Activated T-helper 2 cell treated with anti-CD3 and anti-CD28 coated beads, Interferon-gamma antibody, Interleukin-2, Interleukin-4, amounts not matched to agents 10 μg/mL and 5 μg/mL and 100 μg/mL, durations not matched to agents 14 hours and 24 hours and 36 hours (primary cell): ENCODE measurements at regions of chr11 and their contacts with region 1.

Region 1: GRCh38 chr11:85752890-85753581 is 57.9 kb downstream of the SYTL2 start:
- DNase-seq: peak; percentile 91
- H3K4me3 Mint-ChIP-seq: peak overlapping the region; percentile 57
- H3K27ac Mint-ChIP-seq: peak overlapping the region; percentile 95
- H3K4me1 Mint-ChIP-seq: peaks cover 89% of the 10 kb centered on the region
- H3K27me3 Mint-ChIP-seq: no peaks in the 10 kb centered on the region

Region 2: GRCh38 chr11:85627998-85628770 is 124.9 kb before region 1 on chr11 and contains the start of gene TMEM126B:
- intact Hi-C with region 1: loop called (anchors 1 kb)
- DNase-seq: peak; percentile 95
- H3K4me3 Mint-ChIP-seq: peak within 1 kb of the TSS; percentile 89
- H3K27ac Mint-ChIP-seq: peak within 1 kb of the TSS; percentile 88
- H3K4me1 Mint-ChIP-seq: peaks cover 38% of the 10 kb centered on the region
- H3K27me3 Mint-ChIP-seq: peaks cover 2% of the 10 kb centered on the region
- total RNA-seq, gene TMEM126B: 63.8 and 66.5 TPM in 2 replicates

Region 3: GRCh38 chr11:85699957-85700741 is 52.9 kb before region 1 on chr11:
- intact Hi-C with region 1: loop called (anchors 2 kb)
- DNase-seq: no peak
- H3K4me3 Mint-ChIP-seq: no peak overlapping the region
- H3K27ac Mint-ChIP-seq: peak overlapping the region; percentile 83
- H3K4me1 Mint-ChIP-seq: peaks cover 43% of the 10 kb centered on the region
- H3K27me3 Mint-ChIP-seq: peaks cover 2% of the 10 kb centered on the region

Region 4: DNA sequence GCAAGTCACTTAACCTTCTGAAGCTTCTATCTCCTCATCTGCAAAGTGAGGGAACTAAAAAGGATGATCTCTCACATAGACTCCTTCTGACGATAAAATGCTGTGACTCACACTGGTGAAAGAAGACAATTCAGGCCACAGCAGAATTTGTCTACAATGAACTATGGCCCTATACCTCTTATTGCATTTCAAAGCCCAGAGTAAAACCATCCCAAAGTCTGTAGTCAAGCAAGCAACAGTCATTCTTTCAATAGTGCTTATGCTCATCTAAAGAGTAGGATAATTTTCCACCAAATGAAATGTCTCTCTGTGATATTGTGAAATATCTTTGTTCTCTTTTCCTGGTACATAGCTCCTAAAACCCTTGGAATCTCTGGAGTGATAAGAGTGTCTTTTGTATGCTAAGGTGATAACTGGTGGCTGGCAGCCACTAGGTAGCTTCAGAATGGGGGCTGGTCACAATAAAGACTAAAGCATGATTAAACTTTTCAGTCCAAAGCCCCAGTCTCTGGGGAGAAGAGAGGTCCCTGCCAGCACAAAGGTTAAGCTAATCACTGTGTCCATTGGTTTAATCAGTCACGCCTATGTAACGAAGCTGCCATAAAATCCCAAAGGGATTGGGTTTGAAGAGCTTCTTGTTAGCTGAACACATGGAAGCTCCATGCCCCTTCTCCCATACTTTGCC is 27.1 kb after region 1 on chr11:
- intact Hi-C with region 1: loop called (anchors 1 kb)
- DNase-seq: no peak
- H3K4me3 Mint-ChIP-seq: no peak overlapping the region
- H3K27ac Mint-ChIP-seq: peak overlapping the region; percentile 13
- H3K4me1 Mint-ChIP-seq: peaks cover 46% of the 10 kb centered on the region
- H3K27me3 Mint-ChIP-seq: no peaks in the 10 kb centered on the region

Region 5: GRCh38 chr11:85947431-85948272 is 194.6 kb after region 1 on chr11:
- intact Hi-C with region 1: loop called (anchors 2 kb)
- DNase-seq: no peak
- H3K4me3 Mint-ChIP-seq: peak overlapping the region; percentile 15
- H3K27ac Mint-ChIP-seq: peak overlapping the region; percentile 75
- H3K4me1 Mint-ChIP-seq: peaks cover 35% of the 10 kb centered on the region
- H3K27me3 Mint-ChIP-seq: no peaks in the 10 kb centered on the region